ENCODE measurements at regions of chr5 and their contacts with region 1.

Region 1: GRCh38 chr5:59367791-59368394 is 525.6 kb downstream of the PDE4D start:
- DNase-seq: peak; percentile 62
- ATAC-seq: no peak
- H3K4me3 Mint-ChIP-seq: no peak overlapping the region
- H3K27ac Mint-ChIP-seq: no peak overlapping the region
- H3K4me1 Mint-ChIP-seq: no peaks in the 10 kb centered on the region
- H3K27me3 Mint-ChIP-seq: peaks cover 25% of the 10 kb centered on the region

Region 2: GRCh38 chr5:59351076-59351794 is 16.7 kb before region 1 on chr5:
- CTCF ChIA-PET with region 1: interaction called, 11 read pairs
- POLR2A ChIA-PET with region 1: no interaction called
- DNase-seq: no peak
- ATAC-seq: no peak
- H3K4me3 Mint-ChIP-seq: no peak overlapping the region
- H3K27ac Mint-ChIP-seq: no peak overlapping the region
- H3K4me1 Mint-ChIP-seq: no peaks in the 10 kb centered on the region
- H3K27me3 Mint-ChIP-seq: peaks cover 25% of the 10 kb centered on the region

Region 3: GRCh38 chr5:59380350-59380951 is 12.6 kb after region 1 on chr5:
- CTCF ChIA-PET with region 1: interaction called, 12 read pairs
- POLR2A ChIA-PET with region 1: no interaction called
- DNase-seq: peak; percentile 50
- ATAC-seq: peak; percentile 89
- H3K4me3 Mint-ChIP-seq: no peak overlapping the region
- H3K27ac Mint-ChIP-seq: no peak overlapping the region
- H3K4me1 Mint-ChIP-seq: peaks cover 5% of the 10 kb centered on the region
- H3K27me3 Mint-ChIP-seq: peaks cover 11% of the 10 kb centered on the region